Body of pancreas (tissue), 4 donors: ENCODE measurements at regions of chr11 and their contacts with region 1.

Region 1: GRCh38 chr11:120660024-120660565 is 148.5 kb downstream of the GRIK4 start:
- DNase-seq: peak in 3 of 4 donors; percentile 4 to 50 (median 20)
- ATAC-seq: no peak
- H3K4me3 ChIP-seq: no peak overlapping the region
- H3K27ac ChIP-seq: no peak overlapping the region
- H3K4me1 ChIP-seq: no peaks in the 10 kb centered on the region
- H3K27me3 ChIP-seq: no peaks in the 10 kb centered on the region
- CTCF ChIP-seq: peak in 4 of 7 experiments; percentile 19 to 35 (median 26)
- POLR2A ChIP-seq: no peak

Region 2: GRCh38 chr11:120710354-120711131 is 50.4 kb after region 1 on chr11:
- intact Hi-C with region 1: no loop called
- DNase-seq: peak; percentile 16 to 38 (median 29)
- ATAC-seq: peak; percentile 68
- H3K4me3 ChIP-seq: no peak overlapping the region
- H3K27ac ChIP-seq: no peak overlapping the region
- H3K4me1 ChIP-seq: no peaks in the 10 kb centered on the region
- H3K27me3 ChIP-seq: no peaks in the 10 kb centered on the region
- CTCF ChIP-seq: no peak
- POLR2A ChIP-seq: no peak

Region 3: DNA sequence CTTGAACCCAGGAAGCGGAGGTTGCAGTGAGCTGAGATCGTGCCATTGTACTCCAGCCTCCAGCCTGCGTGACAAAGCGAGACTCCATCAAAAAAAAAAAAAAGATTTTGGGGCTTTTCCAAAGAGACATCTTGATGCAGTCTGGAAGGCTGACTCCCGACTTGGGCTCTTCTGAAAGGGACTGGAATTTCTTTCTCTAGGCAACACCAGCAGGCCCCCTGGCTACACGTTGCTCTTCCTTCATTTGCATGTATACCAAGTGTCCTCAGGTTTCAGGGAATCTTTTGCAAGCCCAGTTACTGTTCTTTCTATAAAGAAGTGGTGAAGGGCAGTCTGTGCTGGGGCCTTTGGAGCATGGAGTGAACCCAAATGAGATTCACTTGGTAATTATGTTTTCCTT is 62.4 kb after region 1 on chr11:
- intact Hi-C with region 1: loop called (anchors 10 kb)
- DNase-seq: no peak
- ATAC-seq: no peak
- H3K4me3 ChIP-seq: no peak overlapping the region
- H3K27ac ChIP-seq: no peak overlapping the region
- H3K4me1 ChIP-seq: no peaks in the 10 kb centered on the region
- H3K27me3 ChIP-seq: no peaks in the 10 kb centered on the region
- CTCF ChIP-seq: no peak
- POLR2A ChIP-seq: no peak

Region 4: GRCh38 chr11:120858740-120859139 is 198.6 kb after region 1 on chr11:
- intact Hi-C with region 1: no loop called
- DNase-seq: no peak
- ATAC-seq: no peak
- H3K4me3 ChIP-seq: no peak overlapping the region
- H3K27ac ChIP-seq: no peak overlapping the region
- H3K4me1 ChIP-seq: no peaks in the 10 kb centered on the region
- H3K27me3 ChIP-seq: no peaks in the 10 kb centered on the region
- CTCF ChIP-seq: no peak
- POLR2A ChIP-seq: no peak